ENCODE measurements at regions of chr4 and their contacts with region 1.

Region 1: DNA sequence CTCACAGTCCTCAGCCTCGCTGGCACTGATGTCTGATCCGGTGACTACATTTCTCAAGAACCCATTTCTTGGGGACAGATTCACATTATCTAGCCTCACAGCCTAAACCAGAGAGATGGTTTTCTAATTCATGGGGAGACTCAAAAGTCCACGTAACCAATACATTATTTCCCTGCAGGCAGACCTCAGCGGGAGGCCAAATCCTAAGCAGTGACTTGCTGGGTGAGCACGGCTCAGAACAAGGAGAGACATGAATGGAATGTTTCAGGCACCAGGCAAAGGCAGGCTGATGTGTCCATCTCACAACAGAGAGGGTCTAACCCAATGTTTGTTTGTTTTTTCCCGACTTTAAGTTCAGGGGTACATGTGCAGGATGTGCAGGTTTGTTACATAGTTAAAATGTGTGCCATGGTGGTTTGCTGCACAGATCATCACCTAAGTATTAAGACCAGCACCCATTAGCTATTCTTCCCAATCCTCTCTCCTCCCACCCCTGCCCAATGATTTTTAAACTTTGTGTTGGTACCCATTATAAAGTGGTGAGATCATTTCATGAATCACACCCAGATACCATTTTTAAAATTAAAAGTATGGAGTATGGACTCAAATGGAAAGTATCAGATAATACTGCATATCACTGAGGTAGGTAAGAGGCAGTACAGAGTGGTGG is 53.3 kb downstream of the SCD5 start:
- DNase-seq: peak; percentile 94
- H3K4me3 ChIP-seq: peak overlapping the region in 1 of 3 experiments; percentile 12
- H3K27ac ChIP-seq: peak overlapping the region; percentile 99
- H3K4me1 ChIP-seq: peaks cover 48% of the 10 kb centered on the region
- H3K27me3 ChIP-seq: no peaks in the 10 kb centered on the region
- CTCF ChIP-seq: no peak

Region 2: GRCh38 chr4:82373816-82374625 is 371.3 kb before region 1 on chr4 and contains the start of gene HNRNPD:
- CTCF ChIA-PET with region 1: no interaction called
- dilution Hi-C with region 1: no loop called
- in situ Hi-C with region 1: no loop called
- intact Hi-C with region 1: loop called (anchors 2 kb)
- DNase-seq: peak; percentile 100
- H3K4me3 ChIP-seq: peak within 1 kb of the TSS; percentile 94 to 100 (median 98)
- H3K27ac ChIP-seq: peak within 1 kb of the TSS; percentile 99
- H3K4me1 ChIP-seq: peaks cover 17% of the 10 kb centered on the region
- H3K27me3 ChIP-seq: no peaks in the 10 kb centered on the region
- CTCF ChIP-seq: peak in 1 of 2 donors; percentile 3
- total RNA-seq, gene HNRNPD: 13.5 to 251 TPM

Region 3: GRCh38 chr4:82785611-82786400 is 40.5 kb after region 1 on chr4:
- CTCF ChIA-PET with region 1: no interaction called
- dilution Hi-C with region 1: no loop called
- in situ Hi-C with region 1: no loop called
- intact Hi-C with region 1: loop called (anchors 2 kb)
- DNase-seq: peak; percentile 91
- H3K4me3 ChIP-seq: peak overlapping the region in 2 of 3 experiments; percentile 12 to 18
- H3K27ac ChIP-seq: peak overlapping the region; percentile 90
- H3K4me1 ChIP-seq: peaks cover 51% of the 10 kb centered on the region
- H3K27me3 ChIP-seq: no peaks in the 10 kb centered on the region
- CTCF ChIP-seq: no peak

Region 4: DNA sequence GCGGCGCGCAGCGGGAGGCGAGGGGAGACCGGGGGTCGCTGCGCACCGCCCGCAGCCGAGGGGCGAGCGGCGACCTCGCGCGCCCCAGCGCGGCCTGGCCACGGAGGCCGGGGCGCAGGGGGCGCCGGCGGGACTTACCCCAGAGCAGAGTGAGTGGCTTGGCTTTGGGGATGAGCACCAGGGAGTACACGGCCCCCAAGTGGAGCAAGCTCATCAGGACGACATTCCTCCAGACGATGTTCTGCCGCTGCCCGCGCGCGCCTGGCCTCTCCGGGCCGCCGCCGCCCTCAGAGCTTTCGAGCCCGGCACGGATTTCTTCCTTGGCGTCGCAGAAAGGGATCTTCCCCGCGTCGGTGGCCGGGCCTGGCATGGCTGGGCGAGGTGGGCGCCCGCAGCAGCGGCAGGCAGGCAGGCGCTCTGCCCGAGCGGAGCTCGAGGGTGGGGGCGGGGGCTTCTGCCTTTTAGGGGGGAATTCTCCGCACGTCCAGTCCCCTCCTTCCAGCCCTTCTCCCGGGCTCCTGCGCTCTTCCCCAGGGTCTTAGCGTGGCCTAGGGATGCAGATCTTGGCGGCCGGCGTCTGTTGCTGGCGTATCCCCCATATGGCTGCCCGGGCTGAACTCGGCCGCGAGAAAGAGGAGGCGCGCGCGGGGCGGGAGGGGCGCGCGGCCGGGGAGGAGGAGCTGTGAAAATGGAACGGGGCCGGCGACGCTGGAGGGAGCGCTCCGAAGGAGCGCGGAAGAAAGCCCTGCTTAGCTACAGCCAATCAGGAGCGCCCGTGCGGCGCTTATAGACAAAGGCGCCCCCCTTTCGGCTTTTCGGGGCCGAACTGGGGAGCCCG is 53.1 kb after region 1 on chr4 and contains the start of gene SCD5:
- CTCF ChIA-PET with region 1: no interaction called
- dilution Hi-C with region 1: no loop called
- in situ Hi-C with region 1: no loop called
- intact Hi-C with region 1: loop called (anchors 1 kb)
- DNase-seq: peak; percentile 86
- H3K4me3 ChIP-seq: peak within 1 kb of the TSS; percentile 71 to 85 (median 81)
- H3K27ac ChIP-seq: peak within 1 kb of the TSS; percentile 61
- H3K4me1 ChIP-seq: peaks cover 21% of the 10 kb centered on the region
- H3K27me3 ChIP-seq: no peaks in the 10 kb centered on the region
- CTCF ChIP-seq: no peak
- total RNA-seq, gene SCD5: 50.4 to 74.3 TPM